Heart right ventricle (tissue), 16 donors: ENCODE measurements at regions of chr18 and their contacts with region 1.

Region 1: DNA sequence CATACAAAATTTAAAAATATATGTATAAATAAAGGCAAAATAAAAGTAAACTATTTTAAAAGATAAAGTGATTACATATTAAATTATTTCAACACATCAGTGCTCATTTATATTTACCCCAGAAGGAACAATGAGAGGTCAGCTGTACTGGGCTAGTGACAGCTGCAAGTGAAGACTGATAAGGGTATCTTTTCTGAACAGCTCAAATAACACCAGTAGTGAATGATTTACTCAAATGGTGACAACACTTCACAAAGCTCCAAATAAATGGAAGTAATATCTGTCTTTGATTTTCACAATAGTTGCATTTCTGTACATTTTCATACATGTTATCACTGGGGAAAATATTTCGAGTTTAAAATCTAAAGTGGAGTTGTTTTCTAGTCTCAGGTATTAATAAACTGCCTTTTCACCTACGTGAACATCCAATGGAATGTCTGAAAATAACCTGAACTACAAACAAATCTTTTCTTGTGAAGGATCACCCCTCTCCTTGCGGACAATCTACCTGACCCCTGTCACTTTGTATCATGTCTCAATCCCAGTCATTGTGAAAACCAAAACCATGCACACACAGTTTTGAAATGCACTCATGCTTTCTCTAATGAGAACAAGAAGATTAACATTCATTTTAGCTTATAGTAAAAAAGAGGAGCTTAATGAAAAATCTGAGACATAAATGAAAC is 1928.8 kb upstream of the CELF4 start:
- DNase-seq: no peak
- ATAC-seq: no peak
- H3K4me3 ChIP-seq: no peak overlapping the region
- H3K27ac ChIP-seq: no peak overlapping the region
- H3K4me1 ChIP-seq: no peaks in the 10 kb centered on the region
- H3K27me3 ChIP-seq: no peaks in the 10 kb centered on the region
- CTCF ChIP-seq: no peak

Region 2: GRCh38 chr18:39448942-39449341 is 45.4 kb before region 1 on chr18:
- intact Hi-C with region 1: loop called in 1 of 10 experiments (anchors 10 kb)
- DNase-seq: no peak
- ATAC-seq: no peak
- H3K4me3 ChIP-seq: no peak overlapping the region
- H3K27ac ChIP-seq: no peak overlapping the region
- H3K4me1 ChIP-seq: peaks cover 0 to 11% (median 8%) of the 10 kb centered on the region in 9 donors
- H3K27me3 ChIP-seq: no peaks in the 10 kb centered on the region
- CTCF ChIP-seq: no peak